ENCODE measurements at regions of chr10 and their contacts with region 1.

Region 1: DNA sequence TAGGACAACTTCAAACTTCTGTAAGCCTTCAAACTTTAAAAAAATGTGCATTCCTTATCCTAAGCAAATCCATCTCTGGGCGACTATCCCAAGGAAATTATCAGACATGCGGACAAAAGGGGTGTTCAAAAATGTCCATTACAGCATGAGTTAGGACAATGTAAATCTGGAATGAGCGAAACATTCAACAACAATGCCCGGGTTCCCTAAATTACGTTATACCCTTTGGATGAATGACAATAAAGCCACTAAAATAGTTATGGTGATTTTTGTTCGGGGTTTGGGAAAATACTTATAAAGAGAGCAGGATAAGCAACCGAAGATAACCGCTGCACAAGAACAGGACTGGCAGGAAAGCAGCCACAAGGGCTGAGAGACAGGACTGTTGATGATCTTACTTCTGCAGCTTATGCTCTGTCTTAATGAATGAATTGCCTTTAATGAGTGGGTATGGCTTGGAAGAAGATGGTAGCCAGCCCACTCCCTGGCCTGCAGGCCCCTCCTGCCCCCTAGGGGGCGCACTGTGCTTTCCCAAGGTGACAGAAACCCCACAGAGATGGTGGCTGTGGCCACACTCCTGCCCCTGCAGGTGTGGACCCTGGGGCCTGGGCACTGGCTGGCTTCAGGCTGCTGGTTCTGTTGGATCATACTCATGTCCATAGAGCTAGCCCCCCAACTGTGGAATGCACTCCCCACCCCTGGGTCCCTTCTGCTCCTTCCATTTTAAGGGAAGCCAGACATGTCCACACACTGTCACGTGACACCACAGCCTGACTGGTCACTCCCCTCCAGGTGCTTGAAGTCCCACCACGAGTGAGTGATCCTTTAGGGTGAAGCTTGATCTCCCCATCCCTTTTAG is 45.0 kb downstream of the ZCCHC24 start:
- DNase-seq: peak; percentile 45
- ATAC-seq: no peak
- H3K4me3 ChIP-seq: no peak overlapping the region
- H3K4me3 Mint-ChIP-seq: no peak overlapping the region
- H3K27ac ChIP-seq: no peak overlapping the region
- H3K27ac Mint-ChIP-seq: no peak overlapping the region
- H3K4me1 ChIP-seq: no peaks in the 10 kb centered on the region
- H3K4me1 Mint-ChIP-seq: no peaks in the 10 kb centered on the region
- H3K27me3 ChIP-seq: peaks cover 0 to 4% (median 1%) of the 10 kb centered on the region in 4 experiments
- H3K27me3 Mint-ChIP-seq: no peaks in the 10 kb centered on the region
- CTCF ChIP-seq: peak; percentile 51

Region 2: DNA sequence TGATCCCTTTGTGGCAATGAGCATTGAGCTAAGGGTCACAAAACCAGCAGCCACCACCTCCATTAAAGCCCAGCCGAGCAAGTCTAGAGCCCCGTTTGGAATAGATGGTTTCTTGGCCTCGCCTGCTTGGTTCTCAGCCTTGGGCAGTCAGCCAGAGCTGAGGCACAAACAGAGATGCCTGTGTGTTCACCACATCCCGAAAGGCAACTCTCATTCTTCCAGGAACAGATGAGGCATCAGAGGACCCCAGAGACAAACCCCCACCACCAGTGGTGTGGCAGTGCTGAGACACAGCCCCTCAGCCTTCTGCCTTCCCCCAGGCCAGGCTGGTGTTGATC is 534.9 kb before region 1 on chr10:
- CTCF ChIA-PET with region 1: no interaction called
- POLR2A ChIA-PET with region 1: no interaction called
- intact Hi-C with region 1: no loop called
- DNase-seq: no peak
- ATAC-seq: no peak
- H3K4me3 ChIP-seq: no peak overlapping the region
- H3K4me3 Mint-ChIP-seq: no peak overlapping the region
- H3K27ac ChIP-seq: no peak overlapping the region
- H3K27ac Mint-ChIP-seq: no peak overlapping the region
- H3K4me1 ChIP-seq: no peaks in the 10 kb centered on the region
- H3K4me1 Mint-ChIP-seq: no peaks in the 10 kb centered on the region
- H3K27me3 ChIP-seq: peaks cover 0 to 10% (median 3%) of the 10 kb centered on the region in 4 experiments
- H3K27me3 Mint-ChIP-seq: peaks cover 33% of the 10 kb centered on the region
- CTCF ChIP-seq: no peak

Region 3: GRCh38 chr10:79266543-79267312 is 133.6 kb before region 1 on chr10:
- CTCF ChIA-PET with region 1: no interaction called
- POLR2A ChIA-PET with region 1: no interaction called
- intact Hi-C with region 1: no loop called
- DNase-seq: no peak
- ATAC-seq: peak; percentile 61
- H3K4me3 ChIP-seq: peak overlapping the region in 3 of 5 experiments; percentile 8 to 45 (median 15)
- H3K4me3 Mint-ChIP-seq: peak overlapping the region; percentile 76
- H3K27ac ChIP-seq: peak overlapping the region; percentile 64 to 71
- H3K27ac Mint-ChIP-seq: peak overlapping the region; percentile 91
- H3K4me1 ChIP-seq: peaks cover 62 to 95% of the 10 kb centered on the region in 2 donors
- H3K4me1 Mint-ChIP-seq: peaks cover 95% of the 10 kb centered on the region
- H3K27me3 ChIP-seq: no peaks in the 10 kb centered on the region
- H3K27me3 Mint-ChIP-seq: no peaks in the 10 kb centered on the region
- CTCF ChIP-seq: no peak

Region 4: DNA sequence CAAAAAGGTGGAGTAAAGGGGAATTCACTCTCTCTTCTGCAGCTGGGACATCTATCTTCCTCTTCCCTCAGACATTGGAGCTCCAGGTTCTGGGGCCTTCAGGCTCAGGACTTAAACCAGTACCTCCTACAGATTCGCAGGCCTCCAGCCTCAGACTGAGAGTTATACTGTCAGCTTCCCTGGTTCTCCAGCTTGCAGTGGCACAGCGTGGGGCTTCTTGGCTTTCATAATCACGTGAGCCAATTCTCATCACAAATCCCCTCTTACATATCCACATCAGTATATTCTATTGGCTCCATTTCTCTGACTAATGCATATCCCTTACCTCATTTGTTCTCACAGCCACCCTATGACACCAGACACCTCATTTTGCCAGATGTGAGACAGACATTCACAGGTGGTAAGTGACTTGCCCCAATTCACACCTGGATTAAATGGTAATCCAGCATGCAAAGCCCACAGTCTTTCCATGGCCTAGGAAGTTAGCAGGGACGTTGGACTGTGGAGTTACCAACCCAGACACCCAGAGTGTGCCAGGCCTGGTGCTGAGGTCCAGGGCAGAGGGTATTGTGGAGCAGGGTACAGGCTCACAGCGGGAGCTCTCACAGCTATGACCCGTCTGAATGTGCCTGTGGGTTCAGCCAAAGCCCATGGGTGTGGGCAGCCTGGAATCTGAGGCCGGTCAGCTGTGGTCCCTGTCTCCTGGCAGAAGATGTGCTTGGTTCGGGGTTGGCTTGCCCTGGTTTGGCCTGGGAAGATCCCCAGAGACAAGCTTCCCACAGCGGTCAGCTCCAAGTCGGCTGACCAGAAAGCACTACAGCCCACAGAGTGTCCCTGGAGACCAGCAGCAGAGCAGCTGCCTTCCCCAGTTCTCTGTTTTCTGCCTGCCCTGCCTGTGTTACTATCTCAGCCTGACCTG is 63.5 kb after region 1 on chr10:
- CTCF ChIA-PET with region 1: interaction called, 3 read pairs
- POLR2A ChIA-PET with region 1: no interaction called
- intact Hi-C with region 1: loop called (anchors 1 kb)
- DNase-seq: no peak
- ATAC-seq: no peak
- H3K4me3 ChIP-seq: no peak overlapping the region
- H3K4me3 Mint-ChIP-seq: no peak overlapping the region
- H3K27ac ChIP-seq: no peak overlapping the region
- H3K27ac Mint-ChIP-seq: no peak overlapping the region
- H3K4me1 ChIP-seq: no peaks in the 10 kb centered on the region
- H3K4me1 Mint-ChIP-seq: no peaks in the 10 kb centered on the region
- H3K27me3 ChIP-seq: peaks cover 0 to 8% (median 6%) of the 10 kb centered on the region in 4 experiments
- H3K27me3 Mint-ChIP-seq: peaks cover 12% of the 10 kb centered on the region
- CTCF ChIP-seq: no peak

Region 5: DNA sequence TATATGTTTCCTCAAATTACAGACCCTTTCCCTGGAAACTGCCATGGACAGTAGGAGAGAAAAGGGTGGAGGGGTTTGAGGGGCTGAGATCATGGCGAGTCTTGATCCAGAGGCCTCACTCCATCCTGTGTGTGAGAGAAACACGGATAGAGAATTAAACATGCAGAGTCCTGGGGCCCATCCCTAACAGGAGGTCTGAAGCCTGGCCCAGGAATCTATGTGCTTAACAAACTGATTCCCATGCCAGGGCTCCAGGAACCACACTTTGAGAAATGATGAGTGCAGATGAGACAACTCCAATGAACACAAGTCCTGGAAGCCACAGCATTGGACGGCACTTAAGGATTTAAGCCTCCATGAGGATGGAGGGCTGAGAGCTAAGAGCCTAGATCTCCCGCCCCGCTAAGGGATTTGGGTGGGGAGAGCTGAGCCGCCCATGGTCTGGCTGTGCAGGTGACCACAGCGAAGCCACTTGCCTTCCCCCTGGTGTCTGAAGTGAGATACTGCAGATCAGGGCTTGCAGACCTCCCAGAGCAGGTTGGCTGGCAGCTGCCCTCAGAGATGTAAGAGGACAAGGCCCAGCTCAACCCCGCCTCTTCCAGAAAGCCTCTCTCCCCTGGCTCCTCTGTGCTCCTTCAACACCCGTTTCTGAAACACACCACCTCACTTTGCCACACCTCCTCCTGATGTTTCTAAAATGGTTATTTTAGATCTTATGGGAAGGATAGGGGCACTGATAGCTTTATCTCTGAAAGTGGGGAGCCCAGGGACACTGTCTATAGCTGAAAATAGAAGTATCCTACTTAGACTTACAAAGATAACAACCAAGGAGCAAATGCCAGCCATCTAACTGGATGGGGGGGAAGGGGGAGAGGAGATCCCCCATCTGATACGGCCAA is 87.2 kb after region 1 on chr10:
- CTCF ChIA-PET with region 1: interaction called, 4 read pairs
- POLR2A ChIA-PET with region 1: no interaction called
- intact Hi-C with region 1: loop called (anchors 1 kb)
- DNase-seq: peak; percentile 58
- ATAC-seq: peak; percentile 65
- H3K4me3 ChIP-seq: no peak overlapping the region
- H3K4me3 Mint-ChIP-seq: no peak overlapping the region
- H3K27ac ChIP-seq: no peak overlapping the region
- H3K27ac Mint-ChIP-seq: no peak overlapping the region
- H3K4me1 ChIP-seq: no peaks in the 10 kb centered on the region
- H3K4me1 Mint-ChIP-seq: no peaks in the 10 kb centered on the region
- H3K27me3 ChIP-seq: no peaks in the 10 kb centered on the region
- H3K27me3 Mint-ChIP-seq: peaks cover 7% of the 10 kb centered on the region
- CTCF ChIP-seq: peak; percentile 67

Measured in B cell (primary cell).